Activated T-helper 1 cell treated with anti-CD3 and anti-CD28 coated beads, Interleukin-12 subunit alpha, Interleukin-12 subunit beta, Interleukin-2, Interleukin-4 antibody, amounts not matched to agents 30 ng/mL and 10 ng/mL and 1 ng/mL, durations not matched to agents 14 hours and 24 hours and 36 hours (primary cell): ENCODE measurements at regions of chr13 and their contacts with region 1.

Region 1: DNA sequence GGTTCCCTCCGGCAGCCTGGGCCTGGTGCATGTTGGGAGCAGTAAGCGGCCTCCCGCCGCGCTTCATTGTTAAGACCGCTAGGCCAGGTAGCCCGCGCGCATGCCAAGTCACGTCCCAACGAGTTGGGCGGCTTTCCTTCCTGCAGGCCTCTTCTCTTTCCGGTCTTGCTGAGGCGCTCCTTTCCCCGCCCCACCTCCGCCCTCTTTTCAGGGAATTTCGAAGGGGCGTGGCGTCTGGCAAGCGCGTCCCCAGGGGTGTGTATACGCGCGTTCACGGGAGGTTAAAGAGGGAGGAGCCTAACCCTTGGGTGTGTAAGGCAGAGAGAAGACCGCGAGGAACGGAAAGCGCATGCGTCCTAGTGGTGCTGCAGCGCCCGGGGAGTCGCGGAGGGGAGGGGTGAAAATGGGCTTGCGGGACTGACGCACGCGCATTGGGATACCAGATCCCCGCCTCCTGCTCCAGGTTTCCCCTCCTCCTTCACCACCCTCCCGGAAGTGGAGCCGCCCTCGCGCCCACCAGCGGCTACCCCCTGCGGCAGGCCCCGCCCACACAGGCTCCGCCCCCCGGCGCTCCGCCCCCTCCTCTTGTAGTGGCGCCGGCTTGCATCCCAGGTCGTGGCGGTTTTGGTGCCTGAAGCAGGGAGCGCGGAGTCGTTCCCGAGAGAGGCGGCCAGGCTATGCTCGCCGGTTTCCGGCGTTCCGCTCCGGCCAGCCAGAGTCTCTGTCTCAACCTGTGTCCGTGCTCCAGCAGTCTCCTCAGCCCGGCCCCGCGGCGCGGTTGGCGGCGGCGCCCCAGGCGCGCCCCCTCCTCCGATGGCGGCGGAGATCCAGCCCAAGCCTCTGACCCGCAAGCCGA is at the start of gene WDFY2:
- DNase-seq: peak; percentile 99
- H3K4me3 Mint-ChIP-seq: peak within 1 kb of the TSS; percentile 94
- H3K27ac Mint-ChIP-seq: peak within 1 kb of the TSS; percentile 96
- H3K4me1 Mint-ChIP-seq: peaks cover 42% of the 10 kb centered on the region
- H3K27me3 Mint-ChIP-seq: no peaks in the 10 kb centered on the region
- total RNA-seq, gene WDFY2: 7.5 and 11.4 TPM in 2 replicates

Region 2: DNA sequence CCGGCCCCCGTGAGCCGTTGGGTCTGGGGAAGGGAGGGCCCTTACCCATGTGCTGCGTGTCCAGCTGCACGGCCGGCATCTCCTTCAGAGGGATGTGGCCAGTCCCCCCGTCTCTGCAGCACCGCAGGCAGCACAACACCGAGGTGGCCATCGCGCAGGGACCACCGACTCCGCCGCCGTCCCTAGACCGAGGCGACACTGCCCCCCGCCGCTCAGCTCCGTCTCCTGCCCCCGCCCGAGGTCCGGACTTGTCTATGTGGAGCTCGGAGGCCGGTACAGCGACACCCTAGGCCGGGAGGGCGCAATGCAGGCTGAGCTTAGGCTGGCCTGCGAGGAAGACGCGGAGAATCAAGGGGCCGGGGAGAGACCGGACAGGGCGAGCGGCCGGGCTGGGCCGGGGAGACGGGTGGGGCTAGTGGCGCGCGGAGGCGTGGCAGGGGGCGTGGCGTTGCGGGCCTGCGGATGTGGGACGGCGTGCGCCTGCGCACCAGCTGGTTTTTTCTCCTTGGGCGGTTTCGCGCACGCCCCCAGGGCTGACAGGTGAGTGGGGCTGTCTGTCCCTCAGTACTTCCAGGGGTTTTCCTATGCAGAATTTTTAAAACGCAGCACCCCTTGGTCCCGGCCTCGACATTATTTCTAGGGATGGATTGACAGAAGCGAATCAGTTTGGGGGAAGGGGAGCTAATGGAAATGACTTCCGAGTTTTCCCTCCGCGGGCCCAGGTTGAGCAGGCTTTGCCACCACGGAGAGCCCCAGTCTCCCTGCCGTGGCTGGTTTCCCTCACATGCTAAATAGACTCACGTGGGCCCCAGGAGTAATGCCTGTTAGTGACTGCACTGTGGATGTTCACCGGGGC is 1647.8 kb before region 1 on chr13 and contains the start of gene SPRYD7:
- intact Hi-C with region 1: loop called (anchors 10 kb)
- DNase-seq: peak; percentile 92
- H3K4me3 Mint-ChIP-seq: peak within 1 kb of the TSS; percentile 94
- H3K27ac Mint-ChIP-seq: peak within 1 kb of the TSS; percentile 87
- H3K4me1 Mint-ChIP-seq: peaks cover 11% of the 10 kb centered on the region
- H3K27me3 Mint-ChIP-seq: peaks cover 22% of the 10 kb centered on the region
- total RNA-seq, gene SPRYD7: 6.9 and 7.0 TPM in 2 replicates

Region 3: DNA sequence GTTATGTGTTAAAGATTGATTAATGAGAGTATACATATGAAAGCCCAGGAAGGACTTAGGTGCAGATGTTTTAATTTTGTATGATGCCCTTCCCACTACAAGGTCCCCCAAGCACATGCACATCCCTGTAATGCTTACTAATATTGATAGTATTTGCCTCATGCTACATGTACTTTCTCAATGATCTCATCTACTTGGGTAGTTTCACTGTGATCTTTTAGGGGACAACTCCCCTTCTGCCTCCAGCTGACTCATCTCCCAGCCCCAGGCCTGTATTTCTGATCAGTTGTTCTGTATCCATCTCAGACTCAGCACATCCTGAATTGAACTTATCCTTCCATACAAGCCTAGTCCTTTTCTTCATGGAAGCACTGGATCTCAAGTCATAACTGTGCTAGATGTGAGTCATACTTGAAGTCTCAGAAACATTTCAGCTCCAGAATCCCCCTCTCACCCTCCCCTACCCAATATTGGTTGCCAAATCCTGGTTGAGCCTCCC is 81.9 kb before region 1 on chr13:
- intact Hi-C with region 1: loop called (anchors 1 kb)
- DNase-seq: no peak
- H3K4me3 Mint-ChIP-seq: no peak overlapping the region
- H3K27ac Mint-ChIP-seq: peak overlapping the region; percentile 18
- H3K4me1 Mint-ChIP-seq: peaks cover 14% of the 10 kb centered on the region
- H3K27me3 Mint-ChIP-seq: peaks cover 8% of the 10 kb centered on the region

Region 4: GRCh38 chr13:51645154-51645650 is 61.1 kb after region 1 on chr13:
- intact Hi-C with region 1: loop called (anchors 2 kb)
- DNase-seq: no peak
- H3K4me3 Mint-ChIP-seq: peak overlapping the region; percentile 40
- H3K27ac Mint-ChIP-seq: peak overlapping the region; percentile 62
- H3K4me1 Mint-ChIP-seq: peaks cover 33% of the 10 kb centered on the region
- H3K27me3 Mint-ChIP-seq: no peaks in the 10 kb centered on the region

Region 5: GRCh38 chr13:52194184-52194868 is 610.2 kb after region 1 on chr13:
- intact Hi-C with region 1: loop called (anchors 1 kb)
- DNase-seq: peak; percentile 85
- H3K4me3 Mint-ChIP-seq: peak overlapping the region; percentile 95
- H3K27ac Mint-ChIP-seq: peak overlapping the region; percentile 95
- H3K4me1 Mint-ChIP-seq: peaks cover 20% of the 10 kb centered on the region
- H3K27me3 Mint-ChIP-seq: no peaks in the 10 kb centered on the region